Natural killer cell (primary cell): ENCODE measurements at regions of chr17 and their contacts with region 1.

Region 1: DNA sequence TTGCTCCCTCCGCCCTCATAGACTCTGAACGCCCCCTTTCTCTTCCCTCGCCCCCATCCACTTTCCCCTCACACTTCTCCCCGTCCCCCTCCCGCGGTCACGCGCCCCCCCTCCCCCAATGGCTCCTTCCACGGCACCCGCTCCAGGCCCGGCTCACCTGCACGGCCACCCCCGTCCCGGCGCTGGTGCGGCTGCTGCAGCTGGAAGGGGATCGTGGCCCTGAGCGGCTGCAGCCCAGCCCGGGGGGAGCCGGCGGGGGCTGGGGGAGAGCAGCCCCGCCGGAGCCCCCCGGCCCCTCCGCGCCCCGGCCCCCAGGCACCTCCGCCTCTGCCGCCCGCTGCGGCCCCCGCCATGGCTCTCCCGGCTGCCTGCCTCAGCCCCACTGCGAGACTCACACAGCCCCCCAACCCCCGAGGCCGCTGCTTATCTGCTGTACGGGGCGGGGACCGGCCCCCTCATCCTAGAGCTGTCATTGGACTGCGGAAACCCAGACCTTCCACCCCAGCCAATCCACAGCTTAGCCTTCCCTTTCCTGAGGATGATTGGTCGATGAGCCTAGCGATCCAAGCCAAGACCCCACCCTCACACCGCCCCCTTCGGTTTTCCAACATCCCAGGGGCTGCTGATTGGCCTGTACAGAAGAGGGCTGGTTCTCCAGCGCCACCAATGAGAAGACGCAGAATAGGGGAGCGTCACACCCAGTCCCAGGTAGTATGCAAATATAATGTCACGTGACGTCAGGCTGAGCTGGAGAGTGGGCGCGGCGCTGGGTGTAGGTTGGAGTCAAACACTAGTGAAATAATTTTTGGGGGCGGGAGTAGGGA is at the start of gene FAM117A:
- DNase-seq: peak; percentile 85 to 98
- ATAC-seq: peak; percentile 80 to 93 (median 85)
- H3K4me3 ChIP-seq: peak within 1 kb of the TSS; percentile 59
- H3K4me3 Mint-ChIP-seq: peak within 1 kb of the TSS; percentile 98
- H3K27ac ChIP-seq: peak within 1 kb of the TSS; percentile 61
- H3K27ac Mint-ChIP-seq: peak within 1 kb of the TSS; percentile 95 to 97
- H3K4me1 ChIP-seq: peaks cover 35% of the 10 kb centered on the region
- H3K4me1 Mint-ChIP-seq: peaks cover 54 to 64% of the 10 kb centered on the region in 2 donors
- H3K27me3 ChIP-seq: no peaks in the 10 kb centered on the region
- H3K27me3 Mint-ChIP-seq: no peaks in the 10 kb centered on the region
- CTCF ChIP-seq: no peak
- total RNA-seq, gene FAM117A: 55.2 to 88.4 (median 79.2) TPM

Region 2: DNA sequence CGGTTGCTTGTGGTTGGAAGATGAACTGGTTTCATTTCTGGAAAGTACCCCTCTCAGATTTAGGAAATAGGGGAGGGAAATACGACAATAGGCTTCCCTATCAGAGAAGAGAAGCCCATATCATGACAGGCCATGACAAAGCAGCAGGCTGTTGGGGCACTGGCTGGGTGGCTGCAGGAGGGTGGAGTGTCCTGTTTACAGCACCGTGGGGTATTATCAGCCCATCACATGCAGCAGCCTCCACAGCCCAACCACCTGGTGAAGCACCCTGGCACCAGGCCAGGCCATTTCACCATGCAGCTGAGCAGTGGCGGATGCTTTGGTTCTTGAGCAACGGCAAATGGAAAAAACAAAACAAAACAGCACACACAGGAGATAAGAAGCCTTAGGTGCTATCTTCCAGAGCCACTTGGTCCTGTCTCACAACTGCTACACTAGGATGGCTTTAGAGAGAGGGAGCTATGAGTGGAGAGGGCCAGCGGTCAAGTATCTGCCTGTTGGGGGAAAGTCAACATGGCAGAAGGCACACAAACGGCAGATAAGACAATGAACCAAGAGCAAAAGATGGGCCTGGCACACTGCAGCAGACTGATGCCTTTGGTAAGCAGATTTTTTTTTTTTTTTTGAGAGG is 24.2 kb before region 1 on chr17:
- intact Hi-C with region 1: loop called (anchors 1 kb)
- DNase-seq: peak; percentile 94 to 100
- ATAC-seq: peak; percentile 88 to 99 (median 95)
- H3K4me3 ChIP-seq: peak overlapping the region; percentile 34
- H3K4me3 Mint-ChIP-seq: peak overlapping the region; percentile 94
- H3K27ac ChIP-seq: peak overlapping the region; percentile 94
- H3K27ac Mint-ChIP-seq: peak overlapping the region; percentile 99 to 100
- H3K4me1 ChIP-seq: peaks cover 92% of the 10 kb centered on the region
- H3K4me1 Mint-ChIP-seq: peaks cover 84 to 87% of the 10 kb centered on the region in 2 donors
- H3K27me3 ChIP-seq: no peaks in the 10 kb centered on the region
- H3K27me3 Mint-ChIP-seq: no peaks in the 10 kb centered on the region
- CTCF ChIP-seq: no peak

Region 3: DNA sequence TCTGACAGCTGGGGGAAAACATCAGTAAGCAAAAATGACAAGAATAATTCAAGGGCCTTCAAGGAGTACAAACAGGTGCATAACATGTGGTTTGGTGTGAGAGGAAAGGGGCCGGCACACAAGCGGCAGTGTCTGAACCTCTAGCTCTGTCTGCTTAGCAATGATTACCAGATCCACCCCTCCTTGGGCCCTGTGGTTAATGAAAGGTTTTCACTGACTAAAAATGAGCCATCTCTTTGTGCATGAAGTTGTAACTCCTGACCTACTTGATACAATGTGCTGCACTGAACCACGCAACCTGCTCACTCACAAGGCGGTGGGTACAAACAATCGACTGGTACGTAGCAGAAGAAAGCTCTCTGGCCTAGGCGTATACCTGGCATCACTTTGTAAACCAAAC is 15.2 kb before region 1 on chr17:
- intact Hi-C with region 1: loop called (anchors 1 kb)
- DNase-seq: peak; percentile 45 to 82
- ATAC-seq: peak; percentile 72 to 83 (median 81)
- H3K4me3 ChIP-seq: no peak overlapping the region
- H3K4me3 Mint-ChIP-seq: peak overlapping the region; percentile 81
- H3K27ac ChIP-seq: peak overlapping the region; percentile 92
- H3K27ac Mint-ChIP-seq: peak overlapping the region; percentile 93 to 97
- H3K4me1 ChIP-seq: peaks cover 78% of the 10 kb centered on the region
- H3K4me1 Mint-ChIP-seq: peaks cover 73 to 76% of the 10 kb centered on the region in 2 donors
- H3K27me3 ChIP-seq: no peaks in the 10 kb centered on the region
- H3K27me3 Mint-ChIP-seq: no peaks in the 10 kb centered on the region
- CTCF ChIP-seq: no peak

Region 4: GRCh38 chr17:49997791-49998703 is 234.1 kb after region 1 on chr17:
- intact Hi-C with region 1: no loop called
- DNase-seq: peak; percentile 76 to 95
- ATAC-seq: peak; percentile 87 to 89 (median 88)
- H3K4me3 ChIP-seq: no peak overlapping the region
- H3K4me3 Mint-ChIP-seq: no peak overlapping the region
- H3K27ac ChIP-seq: no peak overlapping the region
- H3K27ac Mint-ChIP-seq: no peak overlapping the region
- H3K4me1 ChIP-seq: peaks cover 36% of the 10 kb centered on the region
- H3K4me1 Mint-ChIP-seq: peaks cover 17 to 31% of the 10 kb centered on the region in 2 donors
- H3K27me3 ChIP-seq: peaks cover 51% of the 10 kb centered on the region
- H3K27me3 Mint-ChIP-seq: peaks cover 54 to 56% of the 10 kb centered on the region in 2 donors
- CTCF ChIP-seq: peak; percentile 92